Activated naive CD4-positive, alpha-beta T cell treated with anti-CD3 and anti-CD28 coated beads for 36 hours (primary cell): ENCODE measurements at regions of chr9 and their contacts with region 1.

Region 1: GRCh38 chr9:75890472-75891276 is at the start of gene PCSK5:
- DNase-seq: peak; percentile 92
- H3K4me3 Mint-ChIP-seq: peak within 1 kb of the TSS; percentile 97
- H3K27ac Mint-ChIP-seq: peak within 1 kb of the TSS; percentile 66
- H3K4me1 Mint-ChIP-seq: peaks cover 33% of the 10 kb centered on the region
- H3K27me3 Mint-ChIP-seq: no peaks in the 10 kb centered on the region
- total RNA-seq, gene PCSK5: 5.7 to 6.0 TPM

Region 2: DNA sequence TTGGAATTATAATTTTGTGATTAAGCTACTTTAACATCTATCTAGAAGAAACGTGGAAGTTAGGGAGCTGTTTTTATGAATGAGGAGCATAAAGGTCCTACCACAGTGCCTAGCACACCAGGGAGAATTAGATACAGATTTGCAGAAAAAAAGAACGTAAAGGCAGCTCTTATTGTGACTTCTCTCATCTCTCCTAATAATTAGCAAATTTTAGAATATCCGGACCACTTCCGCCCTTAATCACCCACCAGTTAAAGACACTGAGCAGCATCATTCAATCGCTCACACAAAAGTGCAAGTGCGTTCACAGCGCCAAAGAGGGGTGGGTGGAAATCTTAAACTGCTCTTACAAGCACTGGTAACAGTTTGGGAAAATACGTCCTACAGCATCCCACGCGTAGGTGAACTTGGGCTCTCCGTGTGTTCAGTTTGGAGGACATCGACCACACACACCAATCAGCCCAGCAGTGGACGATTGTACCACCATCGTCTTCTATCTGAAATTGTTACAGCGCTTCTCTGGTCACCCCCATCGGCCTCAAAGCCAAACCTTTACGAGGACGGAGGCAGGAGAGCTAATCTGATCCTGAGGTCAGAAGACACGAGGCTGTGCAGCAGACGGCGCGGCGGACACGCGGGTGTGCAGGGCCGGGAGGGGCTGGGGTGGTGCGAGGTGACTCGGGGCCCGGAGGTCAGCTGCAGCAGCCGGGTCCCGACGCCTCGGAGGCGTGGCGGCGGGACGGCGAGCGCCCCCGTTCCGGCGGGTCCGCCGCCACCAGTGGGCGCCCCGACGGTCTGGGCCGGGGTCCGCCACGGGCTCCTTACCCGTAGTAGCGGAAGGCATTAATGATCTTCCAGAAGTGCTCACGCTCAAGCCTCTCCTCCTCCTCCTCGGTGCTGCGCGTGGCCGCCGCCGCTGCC is 863.2 kb before region 1 on chr9:
- CTCF ChIA-PET with region 1: no interaction called
- intact Hi-C with region 1: loop called (anchors 10 kb)
- DNase-seq: peak; percentile 53
- H3K4me3 Mint-ChIP-seq: peak overlapping the region; percentile 99
- H3K27ac Mint-ChIP-seq: peak overlapping the region; percentile 96
- H3K4me1 Mint-ChIP-seq: peaks cover 32% of the 10 kb centered on the region
- H3K27me3 Mint-ChIP-seq: no peaks in the 10 kb centered on the region

Region 3: DNA sequence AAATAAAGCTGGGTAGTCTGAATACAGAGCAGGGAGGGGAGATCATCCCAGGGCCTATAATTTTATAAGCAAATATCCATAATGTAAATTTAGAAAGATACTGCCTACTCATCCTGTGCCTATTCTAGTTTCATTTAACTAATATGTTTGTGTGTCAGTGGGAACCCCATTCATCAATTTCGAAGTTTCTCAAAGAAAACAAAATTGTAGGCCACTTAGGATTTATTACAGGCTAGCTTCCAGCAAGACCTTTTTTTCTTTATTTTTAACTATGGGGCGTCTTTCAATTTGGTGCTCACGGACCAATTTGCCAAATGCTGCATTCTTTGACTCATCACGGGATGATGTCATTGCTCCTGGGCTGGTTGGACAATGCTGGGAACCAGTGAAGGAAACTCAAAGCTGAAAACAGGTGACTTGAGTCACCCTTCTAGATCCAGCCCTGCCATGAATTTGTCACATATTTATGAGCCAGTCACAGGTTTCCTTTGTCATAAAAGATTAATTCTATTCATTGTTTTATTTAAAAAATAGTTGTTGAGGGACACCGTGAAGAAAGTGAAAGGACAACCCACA is 13.2 kb after region 1 on chr9:
- CTCF ChIA-PET with region 1: no interaction called
- intact Hi-C with region 1: loop called (anchors 1 kb)
- DNase-seq: peak; percentile 65
- H3K4me3 Mint-ChIP-seq: no peak overlapping the region
- H3K27ac Mint-ChIP-seq: no peak overlapping the region
- H3K4me1 Mint-ChIP-seq: peaks cover 37% of the 10 kb centered on the region
- H3K27me3 Mint-ChIP-seq: no peaks in the 10 kb centered on the region

Region 4: GRCh38 chr9:76004526-76004925 is 113.9 kb after region 1 on chr9:
- CTCF ChIA-PET with region 1: no interaction called
- intact Hi-C with region 1: loop called (anchors 1 kb)
- DNase-seq: no peak
- H3K4me3 Mint-ChIP-seq: no peak overlapping the region
- H3K27ac Mint-ChIP-seq: peak overlapping the region; percentile 20
- H3K4me1 Mint-ChIP-seq: peaks cover 77% of the 10 kb centered on the region
- H3K27me3 Mint-ChIP-seq: no peaks in the 10 kb centered on the region

Region 5: GRCh38 chr9:76181020-76181641 is 290.5 kb after region 1 on chr9:
- CTCF ChIA-PET with region 1: no interaction called
- intact Hi-C with region 1: loop called (anchors 5 kb)
- DNase-seq: peak; percentile 10
- H3K4me3 Mint-ChIP-seq: no peak overlapping the region
- H3K27ac Mint-ChIP-seq: no peak overlapping the region
- H3K4me1 Mint-ChIP-seq: peaks cover 14% of the 10 kb centered on the region
- H3K27me3 Mint-ChIP-seq: no peaks in the 10 kb centered on the region

Region 6: DNA sequence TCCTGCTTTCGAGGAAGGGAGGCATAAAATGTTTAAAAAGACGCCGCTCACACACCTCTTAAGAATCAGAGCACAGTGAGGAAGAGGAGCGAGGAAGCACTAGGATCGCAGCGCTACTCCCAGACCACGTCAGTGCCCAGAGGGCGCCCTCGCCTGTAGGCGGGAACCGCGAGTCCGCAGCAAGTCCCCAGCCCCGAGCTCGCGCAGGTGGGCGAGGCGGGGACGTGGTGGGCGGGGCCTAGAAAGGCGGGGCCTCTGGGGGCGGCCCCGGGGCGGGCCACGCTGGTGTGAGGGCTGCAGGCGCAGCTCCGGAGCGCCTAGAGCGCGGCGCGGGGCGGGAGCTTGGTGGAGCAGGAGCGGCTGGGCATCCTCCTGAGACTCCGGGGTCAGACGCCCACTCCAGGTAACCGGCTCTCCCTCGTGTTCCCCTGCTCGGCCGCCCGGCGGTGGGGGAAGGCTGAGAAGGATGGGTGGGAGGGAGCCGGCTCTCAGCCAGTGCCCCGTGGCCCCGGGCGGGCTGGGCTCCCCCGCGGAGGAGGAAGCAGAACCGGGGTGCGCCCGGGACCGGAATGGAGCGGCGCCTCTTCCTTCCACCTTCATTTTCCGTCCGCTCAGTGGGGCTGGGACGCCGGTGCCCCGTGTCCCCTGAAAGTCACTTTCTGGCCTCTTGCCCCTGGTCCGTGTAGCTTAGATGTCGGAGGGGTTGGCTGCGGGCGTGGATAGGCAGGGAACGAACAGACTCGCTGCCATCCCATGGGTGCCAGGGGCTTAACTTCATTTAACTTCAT is 568.4 kb after region 1 on chr9 and contains the start of gene GCNT1:
- CTCF ChIA-PET with region 1: no interaction called
- intact Hi-C with region 1: loop called (anchors 1 kb)
- DNase-seq: peak; percentile 89
- H3K4me3 Mint-ChIP-seq: peak within 1 kb of the TSS; percentile 90
- H3K27ac Mint-ChIP-seq: no peak within 1 kb of the TSS
- H3K4me1 Mint-ChIP-seq: peaks cover 12% of the 10 kb centered on the region
- H3K27me3 Mint-ChIP-seq: peaks cover 8% of the 10 kb centered on the region
- total RNA-seq, gene GCNT1: 0.48 to 0.54 TPM